Activated CD8-positive, alpha-beta T cell treated with anti-CD3 and anti-CD28 coated beads, Interleukin-2, amount 10 ng/mL, durations not matched to agents 7 days and 5 days (primary cell): ENCODE measurements at regions of chr20 and their contacts with region 1.

Region 1: DNA sequence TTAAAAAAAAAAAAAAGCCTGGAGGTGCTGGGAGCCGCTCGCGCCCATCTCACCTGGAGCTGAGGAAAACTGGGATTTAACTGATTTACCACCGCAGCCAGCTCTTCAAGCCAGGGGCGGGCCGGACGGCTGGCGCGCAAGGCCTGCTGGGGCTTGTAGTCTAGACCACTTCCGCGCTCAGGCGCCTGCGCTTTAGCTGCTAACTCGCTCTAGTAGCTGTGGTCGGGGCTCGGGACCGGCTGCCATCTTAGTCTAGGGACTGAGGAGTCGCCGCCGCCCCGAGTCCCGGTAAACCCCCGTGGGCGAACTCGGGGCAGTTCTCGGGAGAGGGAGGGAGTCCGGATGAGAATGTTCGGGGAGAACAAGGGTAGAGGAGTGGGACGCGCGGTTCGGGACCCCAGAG is at the start of gene ITCH:
- DNase-seq: peak; percentile 95
- ATAC-seq: peak; percentile 98
- H3K4me3 Mint-ChIP-seq: peak within 1 kb of the TSS; percentile 93
- H3K27ac Mint-ChIP-seq: peak within 1 kb of the TSS; percentile 96
- H3K4me1 Mint-ChIP-seq: peaks cover 46% of the 10 kb centered on the region
- H3K27me3 Mint-ChIP-seq: no peaks in the 10 kb centered on the region
- total RNA-seq, gene ITCH: 52.1 to 59.9 TPM

Region 2: GRCh38 chr20:34324541-34324940 is 38.5 kb before region 1 on chr20:
- CTCF ChIA-PET with region 1: no interaction called
- POLR2A ChIA-PET with region 1: no interaction called
- DNase-seq: no peak
- ATAC-seq: no peak
- H3K4me3 Mint-ChIP-seq: no peak overlapping the region
- H3K27ac Mint-ChIP-seq: no peak overlapping the region
- H3K4me1 Mint-ChIP-seq: no peaks in the 10 kb centered on the region
- H3K27me3 Mint-ChIP-seq: peaks cover 16% of the 10 kb centered on the region

Region 3: GRCh38 chr20:34343458-34344211 is 19.4 kb before region 1 on chr20:
- CTCF ChIA-PET with region 1: no interaction called
- POLR2A ChIA-PET with region 1: no interaction called
- DNase-seq: no peak
- ATAC-seq: no peak
- H3K4me3 Mint-ChIP-seq: no peak overlapping the region
- H3K27ac Mint-ChIP-seq: no peak overlapping the region
- H3K4me1 Mint-ChIP-seq: no peaks in the 10 kb centered on the region
- H3K27me3 Mint-ChIP-seq: no peaks in the 10 kb centered on the region

Region 4: GRCh38 chr20:34403908-34404307 is 40.8 kb after region 1 on chr20:
- CTCF ChIA-PET with region 1: interaction called, 14 read pairs
- POLR2A ChIA-PET with region 1: interaction called, 6 read pairs
- DNase-seq: no peak
- ATAC-seq: no peak
- H3K4me3 Mint-ChIP-seq: no peak overlapping the region
- H3K27ac Mint-ChIP-seq: peak overlapping the region; percentile 22
- H3K4me1 Mint-ChIP-seq: peaks cover 44% of the 10 kb centered on the region
- H3K27me3 Mint-ChIP-seq: no peaks in the 10 kb centered on the region